ENCODE measurements at regions of chr11 and their contacts with region 1.

Region 1: DNA sequence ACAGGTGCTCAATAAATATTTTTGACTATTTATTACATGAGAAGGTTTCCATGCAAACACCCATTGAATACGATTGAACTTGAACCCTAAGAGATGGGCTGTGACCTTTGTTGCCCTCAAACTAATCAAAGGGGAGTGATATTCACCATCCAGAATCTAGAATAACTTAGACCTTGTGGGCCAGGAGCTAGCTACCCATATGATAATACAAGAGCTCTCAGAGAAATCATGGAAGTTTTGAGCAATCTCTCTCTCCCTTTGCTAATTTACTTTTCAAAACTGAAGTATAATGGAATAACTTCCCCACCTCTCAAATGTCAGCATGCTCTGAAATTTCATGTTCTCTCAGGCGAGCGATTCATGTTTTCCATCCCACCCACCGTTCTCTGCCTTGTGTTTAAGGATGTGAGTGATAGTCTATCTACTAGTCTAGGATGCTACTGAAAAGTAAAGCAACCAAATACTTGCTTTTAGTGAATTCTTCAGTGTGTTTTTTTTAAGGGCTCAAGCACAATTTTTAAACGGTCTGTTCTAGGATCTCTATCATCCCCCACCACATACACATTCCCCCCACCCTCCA is 33.3 kb downstream of the BARX2 start:
- DNase-seq: no peak
- H3K4me3 Mint-ChIP-seq: no peak overlapping the region
- H3K27ac Mint-ChIP-seq: peak overlapping the region; percentile 87
- H3K4me1 Mint-ChIP-seq: peaks cover 24% of the 10 kb centered on the region
- H3K27me3 Mint-ChIP-seq: peaks cover 3% of the 10 kb centered on the region

Region 2: DNA sequence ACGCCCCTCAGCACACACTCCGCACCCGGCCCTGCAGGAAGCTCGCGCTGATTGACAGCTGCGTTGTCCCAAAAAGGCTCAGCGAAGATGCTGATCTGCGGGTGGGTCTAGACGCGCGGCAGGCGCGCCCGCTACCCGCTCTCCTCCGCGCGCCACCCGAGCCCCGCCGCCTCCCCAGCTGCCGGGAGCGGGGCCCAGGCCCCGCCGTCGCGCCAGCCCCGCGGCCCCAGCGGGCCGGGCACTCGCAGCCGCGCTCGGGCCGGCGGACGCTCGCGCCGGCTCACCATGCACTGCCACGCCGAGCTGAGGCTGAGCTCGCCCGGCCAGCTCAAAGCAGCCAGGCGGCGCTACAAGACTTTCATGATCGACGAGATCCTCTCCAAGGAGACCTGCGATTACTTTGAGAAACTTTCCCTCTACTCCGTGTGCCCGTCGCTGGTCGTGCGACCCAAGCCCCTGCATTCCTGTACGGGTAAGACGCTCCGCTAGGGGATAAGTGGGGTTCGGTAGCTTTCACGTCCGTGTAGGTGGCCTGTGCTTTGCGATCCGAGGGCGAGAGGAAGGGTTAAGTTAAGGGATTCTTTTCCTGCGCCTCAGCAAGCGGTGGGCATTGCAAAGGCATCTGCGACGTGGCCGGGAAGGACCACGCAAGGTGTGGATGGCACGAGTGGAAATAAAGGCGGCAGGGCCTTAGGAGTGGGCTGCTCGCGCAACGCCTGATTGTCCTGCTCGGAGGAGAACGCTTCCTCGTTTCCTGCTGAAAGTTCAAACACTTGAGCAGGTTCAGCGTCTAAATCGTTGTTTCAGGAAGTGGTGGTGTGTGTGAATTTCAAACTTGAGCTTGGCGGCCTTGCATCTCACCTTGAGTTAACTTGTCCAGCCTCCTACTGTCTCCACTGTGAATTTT is 33.0 kb before region 1 on chr11 and contains the start of gene BARX2:
- intact Hi-C with region 1: loop called (anchors 2 kb)
- DNase-seq: peak; percentile 21
- H3K4me3 Mint-ChIP-seq: peak within 1 kb of the TSS; percentile 88
- H3K27ac Mint-ChIP-seq: peak within 1 kb of the TSS; percentile 77
- H3K4me1 Mint-ChIP-seq: peaks cover 38% of the 10 kb centered on the region
- H3K27me3 Mint-ChIP-seq: peaks cover 63% of the 10 kb centered on the region
- total RNA-seq, gene BARX2: 8.8 and 9.1 TPM in 2 replicates

Region 3: DNA sequence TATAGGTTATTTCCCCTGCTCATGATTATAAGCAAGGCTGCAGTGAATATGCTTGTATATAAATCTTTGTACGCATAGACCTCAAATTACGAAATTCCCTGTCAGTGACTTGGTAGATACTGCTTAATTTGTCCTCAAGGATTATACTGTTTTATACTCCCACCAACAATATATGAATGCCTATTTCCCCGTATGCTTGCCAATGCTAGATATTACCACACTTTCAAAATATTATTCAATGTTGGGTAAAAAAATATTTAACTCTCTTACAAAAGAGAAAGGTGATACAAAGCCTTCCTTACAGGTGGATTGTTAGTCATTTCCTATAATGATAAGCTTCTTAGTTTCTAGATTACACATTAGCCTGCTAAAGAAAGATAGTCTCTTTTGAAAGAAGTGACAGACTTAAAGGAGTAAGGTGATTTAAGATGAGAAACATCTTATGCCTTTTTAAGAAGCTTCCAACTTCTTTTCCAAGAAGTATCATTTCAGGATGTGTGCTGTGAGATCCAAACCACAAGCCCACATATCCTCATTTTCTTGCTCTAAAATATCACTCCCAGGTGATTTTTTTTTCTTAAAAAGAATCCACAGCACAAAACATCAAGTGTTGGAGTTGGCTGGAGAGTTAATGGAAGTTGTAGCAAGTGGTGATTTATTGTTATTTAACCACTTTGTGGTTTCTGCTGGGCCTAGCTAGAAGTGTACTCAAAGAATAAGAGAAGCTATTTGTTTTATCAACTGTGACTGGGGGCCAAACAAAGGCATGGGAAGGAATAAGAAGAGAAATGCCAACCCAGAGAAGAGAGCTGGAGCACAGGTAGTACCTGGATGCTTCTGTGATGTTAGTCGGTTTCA is 25.9 kb after region 1 on chr11:
- intact Hi-C with region 1: loop called (anchors 2 kb)
- DNase-seq: no peak
- H3K4me3 Mint-ChIP-seq: no peak overlapping the region
- H3K27ac Mint-ChIP-seq: peak overlapping the region; percentile 2
- H3K4me1 Mint-ChIP-seq: peaks cover 34% of the 10 kb centered on the region
- H3K27me3 Mint-ChIP-seq: peaks cover 6% of the 10 kb centered on the region